ENCODE measurements at regions of chr17 and their contacts with region 1.

Region 1: DNA sequence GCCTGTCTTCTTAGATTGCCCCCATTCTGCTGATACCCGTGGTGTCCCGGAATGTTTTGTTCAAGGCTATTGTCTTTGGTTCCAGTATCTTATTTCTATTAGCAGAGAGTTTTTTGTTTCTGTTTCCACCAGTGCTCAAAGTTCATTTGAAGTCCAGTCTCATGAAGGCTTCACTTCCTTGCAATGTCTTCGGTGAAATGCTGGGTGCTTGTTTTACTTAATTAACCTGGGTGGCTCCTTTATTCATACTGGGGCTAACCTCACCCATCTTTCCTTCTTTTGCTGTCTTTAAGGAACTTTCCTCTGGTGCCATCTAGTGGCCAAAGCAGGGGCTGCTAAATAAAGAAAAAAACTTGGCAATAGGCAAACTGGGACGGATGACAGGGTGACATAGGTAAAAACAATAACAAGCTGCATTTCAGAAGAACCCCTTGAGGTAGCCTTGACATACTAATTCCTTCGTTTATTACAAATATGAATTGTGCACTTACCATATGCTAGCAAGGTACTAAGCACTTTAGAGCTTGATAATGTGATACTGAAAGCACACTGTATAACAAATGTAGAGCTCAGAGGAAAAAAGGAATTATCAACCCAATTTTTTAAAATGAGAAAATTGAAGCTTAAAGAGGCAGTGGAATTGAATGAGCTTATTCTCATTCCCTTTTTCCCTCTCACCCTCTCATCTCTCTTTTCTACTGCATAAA is 2.8 kb upstream of the SMIM36 start:
- DNase-seq: peak; percentile 30
- H3K4me3 ChIP-seq: no peak overlapping the region
- H3K27ac ChIP-seq: no peak overlapping the region
- H3K27me3 ChIP-seq: peaks cover 5% of the 10 kb centered on the region
- CTCF ChIP-seq: peak; percentile 99

Region 2: DNA sequence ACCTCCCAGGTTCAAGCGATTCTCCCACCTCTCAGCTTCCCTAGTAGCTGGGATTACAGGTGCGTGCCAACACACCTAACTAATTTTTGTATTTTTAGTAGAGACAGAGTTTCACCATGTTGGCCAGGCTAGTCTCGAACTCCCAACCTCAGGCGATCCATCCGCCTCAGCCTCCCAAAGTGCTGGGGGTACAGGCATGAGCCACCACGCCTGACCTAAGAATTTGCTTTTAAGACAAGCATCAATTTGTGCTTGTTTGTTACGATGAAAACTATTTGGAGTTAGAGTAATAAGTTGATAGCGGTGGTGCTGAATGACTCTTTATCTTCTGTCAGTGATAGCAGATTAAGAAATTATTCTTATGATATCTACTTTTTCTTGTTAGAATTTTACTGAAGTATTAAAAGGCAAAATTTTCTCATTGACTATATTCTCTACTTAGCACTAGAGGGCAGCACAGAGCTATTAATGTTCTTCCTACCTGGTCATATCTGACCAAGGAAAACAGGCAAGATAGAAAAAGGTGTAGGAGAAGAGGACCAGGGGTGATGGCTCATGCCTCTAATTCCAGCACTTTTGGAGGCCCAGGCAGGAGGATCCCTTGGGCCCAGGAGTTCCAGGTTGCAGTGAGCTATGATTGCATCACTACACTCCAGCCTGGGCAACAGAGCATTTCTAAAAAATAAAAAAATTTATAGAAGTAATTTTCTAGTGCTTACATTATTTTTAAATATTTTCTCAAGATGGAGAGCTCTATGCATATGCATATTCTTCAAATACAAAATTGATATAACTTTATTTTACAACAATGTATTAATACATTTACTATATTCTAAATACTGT is 521.0 kb before region 1 on chr17:
- CTCF ChIA-PET with region 1: interaction called, 35 read pairs
- POLR2A ChIA-PET with region 1: no interaction called
- DNase-seq: no peak
- H3K4me3 ChIP-seq: no peak overlapping the region
- H3K27ac ChIP-seq: no peak overlapping the region
- H3K27me3 ChIP-seq: no peaks in the 10 kb centered on the region
- CTCF ChIP-seq: peak; percentile 65

Region 3: GRCh38 chr17:55356434-55357328 is 157.4 kb before region 1 on chr17:
- CTCF ChIA-PET with region 1: interaction called, 60 read pairs
- POLR2A ChIA-PET with region 1: no interaction called
- DNase-seq: peak; percentile 13
- H3K4me3 ChIP-seq: no peak overlapping the region
- H3K27ac ChIP-seq: no peak overlapping the region
- H3K27me3 ChIP-seq: peaks cover 3% of the 10 kb centered on the region
- CTCF ChIP-seq: peak; percentile 74

Region 4: GRCh38 chr17:55394357-55395021 is 119.5 kb before region 1 on chr17:
- CTCF ChIA-PET with region 1: interaction called, 39 read pairs
- POLR2A ChIA-PET with region 1: no interaction called
- DNase-seq: no peak
- H3K4me3 ChIP-seq: no peak overlapping the region
- H3K27ac ChIP-seq: no peak overlapping the region
- H3K27me3 ChIP-seq: no peaks in the 10 kb centered on the region
- CTCF ChIP-seq: no peak

Region 5: GRCh38 chr17:55421179-55421934 is 92.7 kb before region 1 on chr17 and contains the start of gene MMD:
- CTCF ChIA-PET with region 1: interaction called, 22 read pairs
- POLR2A ChIA-PET with region 1: no interaction called
- DNase-seq: no peak
- H3K4me3 ChIP-seq: peak within 1 kb of the TSS; percentile 92
- H3K27ac ChIP-seq: peak within 1 kb of the TSS; percentile 24
- H3K27me3 ChIP-seq: no peaks in the 10 kb centered on the region
- CTCF ChIP-seq: no peak
- polyA plus RNA-seq, gene MMD: 33.0 and 41.6 TPM in 2 replicates

Region 6: DNA sequence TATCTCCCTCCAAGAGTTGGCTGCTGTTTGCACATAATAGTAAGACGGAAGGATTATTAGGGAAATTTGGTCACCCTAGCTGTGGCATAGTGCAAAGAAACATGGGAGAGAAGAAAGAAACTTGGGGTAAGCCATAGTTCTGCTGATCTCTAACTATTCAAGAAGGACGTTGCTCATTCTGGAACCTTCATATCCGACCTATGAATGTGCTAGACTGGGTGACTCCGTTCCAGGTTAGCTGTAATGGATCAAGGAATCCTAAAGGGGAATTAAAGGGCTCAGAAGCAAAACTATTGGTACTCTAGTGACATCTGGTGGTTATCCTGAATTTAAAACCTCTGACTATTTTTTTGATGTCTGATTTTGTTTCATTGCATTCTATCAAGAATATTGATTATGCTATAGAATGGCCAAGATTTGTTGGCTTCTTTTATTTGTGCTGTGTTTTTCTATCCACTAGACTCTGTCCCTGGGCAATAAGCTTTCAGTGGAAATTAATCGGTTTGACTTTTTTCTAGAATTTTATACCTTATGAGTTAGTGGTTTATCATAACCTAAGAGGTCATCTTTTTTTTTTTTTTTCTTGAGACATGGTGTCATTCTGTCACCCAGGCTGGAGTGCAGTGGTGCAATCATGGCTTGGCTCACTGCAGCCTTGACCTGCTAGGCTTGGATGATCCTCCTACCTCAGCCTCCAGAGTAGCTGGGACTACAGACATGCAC is 256.3 kb after region 1 on chr17:
- CTCF ChIA-PET with region 1: interaction called, 12 read pairs
- POLR2A ChIA-PET with region 1: no interaction called
- DNase-seq: peak; percentile 29
- H3K4me3 ChIP-seq: no peak overlapping the region
- H3K27ac ChIP-seq: peak overlapping the region; percentile 78
- H3K27me3 ChIP-seq: no peaks in the 10 kb centered on the region
- CTCF ChIP-seq: peak; percentile 61